Endothelial cell of umbilical vein (primary cell): ENCODE measurements at regions of chr3 and their contacts with region 1.

Region 1: DNA sequence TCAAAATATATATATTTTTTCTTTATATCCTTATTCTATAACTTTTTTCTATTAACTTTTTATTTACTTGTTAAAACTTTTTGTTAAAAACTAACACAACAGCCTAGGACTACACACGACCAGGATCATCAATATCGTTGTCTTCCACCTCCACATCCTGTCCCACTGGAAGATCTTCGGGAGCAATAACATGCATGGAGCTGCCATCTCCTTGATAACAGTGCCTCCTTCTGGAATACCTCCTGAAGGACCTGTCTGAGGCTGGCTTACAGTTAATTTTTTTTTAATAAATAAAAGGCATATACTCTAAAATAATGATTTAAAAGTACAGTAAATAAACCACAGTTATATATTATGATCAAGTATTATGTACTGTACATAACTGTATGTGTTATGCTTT is 58.9 kb downstream of the SFMBT1 start:
- DNase-seq: peak; percentile 40
- H3K4me3 ChIP-seq: no peak overlapping the region
- H3K27ac ChIP-seq: no peak overlapping the region
- H3K4me1 ChIP-seq: no peaks in the 10 kb centered on the region
- H3K27me3 ChIP-seq: no peaks in the 10 kb centered on the region
- CTCF ChIP-seq: peak; percentile 6 to 15
- POLR2A ChIP-seq: no peak

Region 2: GRCh38 chr3:52532517-52532837 is 454.5 kb before region 1 on chr3:
- CTCF ChIA-PET with region 1: no interaction called
- POLR2A ChIA-PET with region 1: no interaction called
- dilution Hi-C with region 1: no loop called
- intact Hi-C with region 1: no loop called
- DNase-seq: peak; percentile 81
- H3K4me3 ChIP-seq: peak overlapping the region; percentile 34 to 90 (median 71)
- H3K27ac ChIP-seq: peak overlapping the region; percentile 92
- H3K4me1 ChIP-seq: peaks cover 46% of the 10 kb centered on the region
- H3K27me3 ChIP-seq: no peaks in the 10 kb centered on the region
- CTCF ChIP-seq: no peak
- POLR2A ChIP-seq: peak; percentile 51

Region 3: DNA sequence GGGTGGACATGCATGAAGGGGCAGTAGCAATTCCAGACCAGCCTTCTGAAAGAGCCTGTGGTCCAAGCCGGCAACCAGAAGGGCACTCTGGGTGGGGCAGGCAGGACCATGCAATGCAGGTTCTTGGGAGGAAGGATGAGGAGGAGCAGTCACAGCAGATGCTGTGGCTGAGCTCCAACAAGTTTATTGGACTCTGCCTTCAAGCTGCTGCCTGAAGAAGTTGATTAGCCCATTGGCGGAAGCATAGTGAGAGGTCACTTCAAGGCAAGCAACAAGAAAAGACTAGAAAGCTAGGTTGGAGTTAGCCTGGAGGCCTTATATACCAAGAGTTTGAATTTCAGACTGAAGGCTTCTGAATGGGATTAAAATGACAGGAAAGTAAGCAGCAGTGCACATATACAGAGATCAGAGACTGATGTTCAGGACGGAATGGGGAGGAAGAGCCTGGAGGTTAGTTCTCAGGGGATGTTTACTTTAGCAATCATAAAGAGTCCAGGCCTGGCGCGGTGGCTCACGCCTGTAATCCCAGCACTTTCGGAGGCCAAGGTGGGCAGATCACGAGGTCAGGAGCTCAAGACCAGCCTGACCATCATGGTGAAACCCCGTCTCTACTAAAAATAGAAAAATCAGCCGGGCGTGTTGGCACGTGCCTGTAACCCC is 19.0 kb after region 1 on chr3:
- CTCF ChIA-PET with region 1: interaction called, 20 read pairs
- POLR2A ChIA-PET with region 1: interaction called, 6 read pairs
- dilution Hi-C with region 1: no loop called
- intact Hi-C with region 1: no loop called
- DNase-seq: no peak
- H3K4me3 ChIP-seq: no peak overlapping the region
- H3K27ac ChIP-seq: no peak overlapping the region
- H3K4me1 ChIP-seq: no peaks in the 10 kb centered on the region
- H3K27me3 ChIP-seq: no peaks in the 10 kb centered on the region
- CTCF ChIP-seq: no peak
- POLR2A ChIP-seq: no peak